Activated CD4-positive, alpha-beta T cell treated with anti-CD3 and anti-CD28 coated beads for 36 hours (primary cell): ENCODE measurements at regions of chr3 and their contacts with region 1.

Region 1: DNA sequence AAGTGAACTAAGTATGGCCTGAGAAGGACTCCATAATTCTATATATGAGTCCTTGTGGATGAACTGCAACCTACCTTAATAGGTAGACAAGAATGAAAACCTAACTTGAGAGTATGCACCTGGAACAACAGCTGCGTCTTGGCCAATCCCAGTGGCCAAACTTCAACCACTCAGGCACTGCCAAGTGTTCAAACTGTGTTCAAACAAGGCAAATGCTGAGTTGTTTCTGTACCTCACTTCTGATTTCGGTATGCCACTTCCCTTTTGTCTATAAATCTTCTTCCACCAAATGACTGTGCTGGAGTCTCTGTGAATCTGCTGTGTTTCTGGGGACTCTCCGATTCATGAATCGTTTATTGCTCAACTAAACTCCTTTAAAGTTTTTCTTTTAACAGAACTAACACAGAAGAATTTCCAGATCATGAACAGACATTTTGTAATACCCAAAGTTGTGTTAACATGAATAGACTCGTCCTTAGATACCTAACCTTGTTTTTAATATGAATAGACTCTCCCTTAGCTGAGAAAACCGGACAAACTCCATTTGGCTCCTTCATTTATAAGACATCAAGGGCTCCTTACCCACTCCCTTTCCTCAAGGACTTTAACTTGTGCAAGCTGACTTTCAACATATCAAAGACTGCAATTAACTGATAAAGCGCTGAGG is 4.1 kb downstream of the ZNF717 start:
- DNase-seq: peak; percentile 69
- ATAC-seq: no peak
- H3K4me3 Mint-ChIP-seq: no peak overlapping the region
- H3K27ac Mint-ChIP-seq: peak overlapping the region; percentile 84
- H3K4me1 Mint-ChIP-seq: peaks cover 23% of the 10 kb centered on the region
- H3K27me3 Mint-ChIP-seq: no peaks in the 10 kb centered on the region

Region 2: GRCh38 chr3:75076481-75076880 is 704.7 kb before region 1 on chr3:
- CTCF ChIA-PET with region 1: no interaction called
- POLR2A ChIA-PET with region 1: no interaction called
- intact Hi-C with region 1: no loop called
- DNase-seq: no peak
- ATAC-seq: no peak
- H3K4me3 Mint-ChIP-seq: no peak overlapping the region
- H3K27ac Mint-ChIP-seq: no peak overlapping the region
- H3K4me1 Mint-ChIP-seq: no peaks in the 10 kb centered on the region
- H3K27me3 Mint-ChIP-seq: no peaks in the 10 kb centered on the region

Region 3: GRCh38 chr3:75110741-75111140 is 670.5 kb before region 1 on chr3:
- CTCF ChIA-PET with region 1: no interaction called
- POLR2A ChIA-PET with region 1: no interaction called
- intact Hi-C with region 1: no loop called
- DNase-seq: no peak
- ATAC-seq: no peak
- H3K4me3 Mint-ChIP-seq: no peak overlapping the region
- H3K27ac Mint-ChIP-seq: no peak overlapping the region
- H3K4me1 Mint-ChIP-seq: no peaks in the 10 kb centered on the region
- H3K27me3 Mint-ChIP-seq: peaks cover 2% of the 10 kb centered on the region

Region 4: GRCh38 chr3:75737831-75738493 is 43.2 kb before region 1 on chr3:
- CTCF ChIA-PET with region 1: no interaction called
- POLR2A ChIA-PET with region 1: no interaction called
- intact Hi-C with region 1: loop called in 1 of 2 experiments (anchors 2 kb)
- DNase-seq: no peak
- ATAC-seq: no peak
- H3K4me3 Mint-ChIP-seq: no peak overlapping the region
- H3K27ac Mint-ChIP-seq: no peak overlapping the region
- H3K4me1 Mint-ChIP-seq: no peaks in the 10 kb centered on the region
- H3K27me3 Mint-ChIP-seq: no peaks in the 10 kb centered on the region